Activated CD8-positive, alpha-beta T cell treated with anti-CD3 and anti-CD28 coated beads for 36 hours (primary cell): ENCODE measurements at regions of chr5 and their contacts with region 1.

Region 1: GRCh38 chr5:112885001-112885400 is 23.9 kb downstream of the SRP19 start:
- DNase-seq: no peak
- ATAC-seq: no peak
- H3K4me3 Mint-ChIP-seq: no peak overlapping the region
- H3K27ac Mint-ChIP-seq: no peak overlapping the region
- H3K4me1 Mint-ChIP-seq: peaks cover 31% of the 10 kb centered on the region
- H3K27me3 Mint-ChIP-seq: no peaks in the 10 kb centered on the region
- CTCF ChIP-seq: no peak

Region 2: GRCh38 chr5:112669328-112669963 is 215.6 kb before region 1 on chr5:
- CTCF ChIA-PET with region 1: no interaction called
- POLR2A ChIA-PET with region 1: no interaction called
- intact Hi-C with region 1: no loop called
- DNase-seq: no peak
- ATAC-seq: no peak
- H3K4me3 Mint-ChIP-seq: no peak overlapping the region
- H3K27ac Mint-ChIP-seq: no peak overlapping the region
- H3K4me1 Mint-ChIP-seq: no peaks in the 10 kb centered on the region
- H3K27me3 Mint-ChIP-seq: peaks cover 6% of the 10 kb centered on the region
- CTCF ChIP-seq: no peak

Region 3: GRCh38 chr5:112968411-112969106 is 83.6 kb after region 1 on chr5:
- CTCF ChIA-PET with region 1: no interaction called
- POLR2A ChIA-PET with region 1: no interaction called
- intact Hi-C with region 1: loop called (anchors 10 kb)
- DNase-seq: no peak
- ATAC-seq: no peak
- H3K4me3 Mint-ChIP-seq: no peak overlapping the region
- H3K27ac Mint-ChIP-seq: no peak overlapping the region
- H3K4me1 Mint-ChIP-seq: peaks cover 20% of the 10 kb centered on the region
- H3K27me3 Mint-ChIP-seq: no peaks in the 10 kb centered on the region
- CTCF ChIP-seq: no peak